Endothelial cell of umbilical vein (primary cell): ENCODE measurements at regions of chr16 and their contacts with region 1.

Region 1: GRCh38 chr16:48542020-48542473 is 67.9 kb downstream of the N4BP1 start:
- DNase-seq: peak; percentile 49
- H3K4me3 ChIP-seq: no peak overlapping the region
- H3K27ac ChIP-seq: no peak overlapping the region
- H3K4me1 ChIP-seq: no peaks in the 10 kb centered on the region
- H3K27me3 ChIP-seq: no peaks in the 10 kb centered on the region
- CTCF ChIP-seq: peak; percentile 41 to 57
- POLR2A ChIP-seq: no peak

Region 2: DNA sequence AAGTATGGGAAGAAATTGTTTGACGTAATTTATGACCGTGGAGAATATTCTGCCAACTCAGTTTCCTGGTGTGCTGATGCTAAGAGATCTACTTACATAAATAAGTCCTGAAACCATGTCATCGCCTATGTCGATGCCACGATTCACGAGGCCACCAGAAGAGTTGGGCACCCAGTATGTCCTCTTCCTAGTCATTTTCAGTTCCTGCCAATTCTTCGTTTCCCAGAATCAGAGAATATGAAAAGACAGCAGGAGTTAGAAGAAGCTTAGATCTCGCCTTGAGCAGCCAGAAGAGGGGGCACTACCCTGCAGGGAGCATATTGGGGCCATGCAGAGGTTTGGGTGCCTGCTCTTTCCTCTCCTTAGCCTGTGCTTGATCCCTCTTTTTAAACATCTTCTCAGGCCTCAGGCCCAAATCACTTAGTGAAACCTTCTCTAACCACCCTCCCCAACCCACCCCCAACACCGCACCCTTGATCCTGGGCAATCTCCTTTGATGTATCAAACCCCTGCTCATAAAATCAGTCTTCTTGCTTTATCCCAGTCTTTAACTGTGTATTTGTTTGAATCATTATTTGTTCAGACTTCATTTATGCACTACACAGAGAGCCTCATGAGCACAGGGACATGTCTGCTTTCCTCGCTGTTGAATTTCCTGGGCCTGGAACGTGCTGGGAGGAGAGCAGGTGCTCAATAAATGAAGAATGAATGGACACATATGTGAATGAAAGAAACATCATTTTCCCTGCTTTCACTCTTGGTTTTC is 310.1 kb before region 1 on chr16:
- CTCF ChIA-PET with region 1: interaction called, 7 read pairs
- POLR2A ChIA-PET with region 1: no interaction called
- dilution Hi-C with region 1: no loop called
- intact Hi-C with region 1: loop called (anchors 2 kb)
- DNase-seq: peak; percentile 53
- H3K4me3 ChIP-seq: no peak overlapping the region
- H3K27ac ChIP-seq: no peak overlapping the region
- H3K4me1 ChIP-seq: no peaks in the 10 kb centered on the region
- H3K27me3 ChIP-seq: peaks cover 0 to 2% of the 10 kb centered on the region in 2 experiments
- CTCF ChIP-seq: peak; percentile 35 to 67
- POLR2A ChIP-seq: no peak

Region 3: GRCh38 chr16:48353565-48354163 is 188.4 kb before region 1 on chr16:
- CTCF ChIA-PET with region 1: interaction called, 7 read pairs
- POLR2A ChIA-PET with region 1: no interaction called
- dilution Hi-C with region 1: no loop called
- intact Hi-C with region 1: loop called (anchors 1 kb)
- DNase-seq: peak; percentile 75
- H3K4me3 ChIP-seq: no peak overlapping the region
- H3K27ac ChIP-seq: no peak overlapping the region
- H3K4me1 ChIP-seq: no peaks in the 10 kb centered on the region
- H3K27me3 ChIP-seq: no peaks in the 10 kb centered on the region
- CTCF ChIP-seq: peak; percentile 83 to 88
- POLR2A ChIP-seq: no peak

Region 4: GRCh38 chr16:48365581-48366164 is 176.4 kb before region 1 on chr16:
- CTCF ChIA-PET with region 1: no interaction called
- POLR2A ChIA-PET with region 1: no interaction called
- dilution Hi-C with region 1: no loop called
- intact Hi-C with region 1: loop called (anchors 5 kb)
- DNase-seq: peak; percentile 89
- H3K4me3 ChIP-seq: peak overlapping the region; percentile 57 to 83 (median 70)
- H3K27ac ChIP-seq: peak overlapping the region; percentile 66
- H3K4me1 ChIP-seq: peaks cover 14% of the 10 kb centered on the region
- H3K27me3 ChIP-seq: no peaks in the 10 kb centered on the region
- CTCF ChIP-seq: peak in 1 of 2 donors; percentile 18
- POLR2A ChIP-seq: peak; percentile 50

Region 5: DNA sequence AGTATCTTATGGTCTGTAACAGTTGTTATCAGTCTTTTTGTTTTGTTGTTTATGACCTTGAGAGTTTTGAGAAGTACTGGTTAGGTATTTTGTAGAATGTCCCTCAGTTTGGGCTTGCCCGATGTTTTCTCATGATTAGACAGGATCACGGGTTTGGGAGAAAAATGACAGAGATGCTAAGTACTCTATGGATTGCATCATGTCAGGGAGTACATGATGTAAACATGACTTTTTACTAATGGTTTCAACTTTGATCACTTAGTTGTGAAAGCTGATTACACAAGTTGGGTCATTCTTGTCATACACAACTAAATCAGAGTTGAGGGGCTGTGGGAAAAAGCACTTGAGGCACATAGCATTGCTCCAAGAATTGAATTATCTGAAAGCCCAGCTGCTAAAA is 62.1 kb before region 1 on chr16:
- CTCF ChIA-PET with region 1: no interaction called
- POLR2A ChIA-PET with region 1: no interaction called
- dilution Hi-C with region 1: no loop called
- intact Hi-C with region 1: no loop called
- DNase-seq: no peak
- H3K4me3 ChIP-seq: no peak overlapping the region
- H3K27ac ChIP-seq: no peak overlapping the region
- H3K4me1 ChIP-seq: no peaks in the 10 kb centered on the region
- H3K27me3 ChIP-seq: peaks cover 0 to 2% of the 10 kb centered on the region in 2 experiments
- CTCF ChIP-seq: no peak
- POLR2A ChIP-seq: no peak